SK-N-SH (cell line): ENCODE measurements at regions of chr1 and their contacts with region 1.

Region 1: DNA sequence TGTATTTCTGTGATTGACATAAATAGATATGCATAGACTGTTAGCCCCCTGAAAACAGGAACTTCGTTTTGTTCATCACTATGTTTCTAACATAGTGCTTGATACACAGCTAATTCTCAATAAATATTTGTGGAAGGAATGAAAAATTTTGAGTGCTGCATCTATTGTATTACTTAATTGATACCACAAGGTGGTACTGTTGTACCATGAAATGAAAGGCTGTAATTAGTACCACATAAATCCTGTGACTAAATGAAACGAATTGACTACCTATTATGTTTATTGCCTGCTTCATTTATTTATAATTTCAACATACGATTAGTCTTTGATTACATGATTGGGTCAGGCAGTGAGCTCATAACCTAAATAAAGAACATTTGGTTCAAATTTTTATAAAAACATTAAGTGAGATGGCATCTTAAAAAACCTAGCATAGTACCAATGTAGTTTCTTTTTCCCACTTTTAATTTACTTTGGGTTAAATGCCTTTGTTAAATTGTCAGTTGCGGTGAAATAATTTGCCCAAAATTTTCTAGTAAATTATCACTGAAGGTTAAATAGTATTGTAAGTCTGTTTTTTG is 15.0 kb upstream of the TGFB2 start:
- DNase-seq: peak; percentile 56
- H3K4me3 ChIP-seq: no peak overlapping the region; a peak in 1 of 4 replicates
- H3K27ac ChIP-seq: peak overlapping the region in 1 of 2 experiments; percentile 31; a peak in 1 of 4 replicates
- H3K4me1 ChIP-seq: peaks cover 0 to 6% of the 10 kb centered on the region in 2 experiments; a peak in 2 of 4 replicates
- H3K27me3 ChIP-seq: no peaks in the 10 kb centered on the region
- CTCF ChIP-seq: peak; percentile 82
- EP300 ChIP-seq: no peak
- RAD21 ChIP-seq: peak; percentile 90

Region 2: DNA sequence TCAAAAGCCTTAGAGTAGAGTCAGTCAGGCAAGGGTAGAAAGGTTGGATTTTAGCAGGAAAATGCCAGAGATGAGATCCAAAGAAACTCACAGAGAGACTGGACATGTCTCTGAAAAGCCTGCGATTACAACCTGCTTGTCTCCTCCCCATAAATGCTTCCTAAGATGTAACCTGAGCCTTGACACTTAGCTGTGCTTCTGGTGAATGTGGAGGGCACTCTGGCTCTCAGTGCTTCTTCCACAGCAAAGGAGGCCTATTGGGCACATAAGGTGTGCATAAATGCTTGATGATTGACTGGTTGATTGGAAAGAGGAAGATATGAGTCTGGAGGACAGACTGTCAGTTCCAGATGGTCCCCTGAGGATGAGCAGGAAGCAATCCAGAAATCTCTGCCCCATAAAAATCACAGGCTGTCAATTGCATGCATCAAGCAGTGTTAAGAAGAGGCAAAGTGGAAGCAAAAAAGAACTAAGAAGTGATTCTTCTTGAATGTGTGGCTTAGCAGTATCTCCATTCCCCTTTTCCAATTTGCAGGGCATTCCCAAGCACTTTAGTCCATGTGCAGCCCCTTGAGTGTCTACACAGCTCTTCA is 281.2 kb before region 1 on chr1:
- CTCF ChIA-PET with region 1: no interaction called
- POLR2A ChIA-PET with region 1: no interaction called
- DNase-seq: no peak
- H3K4me3 ChIP-seq: no peak overlapping the region
- H3K27ac ChIP-seq: no peak overlapping the region
- H3K4me1 ChIP-seq: no peaks in the 10 kb centered on the region; a peak in 1 of 4 replicates
- H3K27me3 ChIP-seq: no peaks in the 10 kb centered on the region
- CTCF ChIP-seq: no peak
- EP300 ChIP-seq: no peak
- RAD21 ChIP-seq: no peak

Region 3: GRCh38 chr1:218299416-218299815 is 30.7 kb before region 1 on chr1:
- CTCF ChIA-PET with region 1: interaction called, 24 read pairs
- POLR2A ChIA-PET with region 1: no interaction called
- DNase-seq: no peak
- H3K4me3 ChIP-seq: no peak overlapping the region; a peak in 1 of 4 replicates
- H3K27ac ChIP-seq: peak overlapping the region; percentile 19 to 39; a peak in 2 of 4 replicates
- H3K4me1 ChIP-seq: peaks cover 6 to 10% of the 10 kb centered on the region in 2 experiments; a peak in 3 of 4 replicates
- H3K27me3 ChIP-seq: no peaks in the 10 kb centered on the region
- CTCF ChIP-seq: peak; percentile 68
- EP300 ChIP-seq: no peak
- RAD21 ChIP-seq: peak; percentile 77

Region 4: GRCh38 chr1:218304281-218305039 is 25.7 kb before region 1 on chr1:
- CTCF ChIA-PET with region 1: interaction called, 24 read pairs
- POLR2A ChIA-PET with region 1: no interaction called
- DNase-seq: peak; percentile 73
- H3K4me3 ChIP-seq: no peak overlapping the region
- H3K27ac ChIP-seq: peak overlapping the region in 1 of 2 experiments; percentile 53; a peak in 1 of 4 replicates
- H3K4me1 ChIP-seq: peaks cover 0 to 13% of the 10 kb centered on the region in 2 experiments; a peak in 3 of 4 replicates
- H3K27me3 ChIP-seq: no peaks in the 10 kb centered on the region
- CTCF ChIP-seq: no peak
- EP300 ChIP-seq: no peak
- RAD21 ChIP-seq: no peak

Region 5: GRCh38 chr1:218314316-218314715 is 15.8 kb before region 1 on chr1:
- CTCF ChIA-PET with region 1: interaction called, 10 read pairs
- POLR2A ChIA-PET with region 1: no interaction called
- DNase-seq: no peak
- H3K4me3 ChIP-seq: no peak overlapping the region
- H3K27ac ChIP-seq: no peak overlapping the region
- H3K4me1 ChIP-seq: no peaks in the 10 kb centered on the region
- H3K27me3 ChIP-seq: no peaks in the 10 kb centered on the region
- CTCF ChIP-seq: no peak
- EP300 ChIP-seq: no peak
- RAD21 ChIP-seq: no peak

Region 6: GRCh38 chr1:218345673-218346390 is 15.7 kb after region 1 on chr1:
- CTCF ChIA-PET with region 1: interaction called, 22 read pairs
- POLR2A ChIA-PET with region 1: no interaction called
- DNase-seq: peak; percentile 89
- H3K4me3 ChIP-seq: peak overlapping the region; percentile 52 to 57
- H3K27ac ChIP-seq: peak overlapping the region; percentile 29 to 32; a peak in 3 of 4 replicates
- H3K4me1 ChIP-seq: peaks cover 7 to 24% of the 10 kb centered on the region in 2 experiments; a peak in 2 of 4 replicates
- H3K27me3 ChIP-seq: no peaks in the 10 kb centered on the region
- CTCF ChIP-seq: no peak
- EP300 ChIP-seq: no peak; a peak in 1 of 4 replicates
- RAD21 ChIP-seq: peak; percentile 12; the same call in 1 of the 2 replicates

Region 7: DNA sequence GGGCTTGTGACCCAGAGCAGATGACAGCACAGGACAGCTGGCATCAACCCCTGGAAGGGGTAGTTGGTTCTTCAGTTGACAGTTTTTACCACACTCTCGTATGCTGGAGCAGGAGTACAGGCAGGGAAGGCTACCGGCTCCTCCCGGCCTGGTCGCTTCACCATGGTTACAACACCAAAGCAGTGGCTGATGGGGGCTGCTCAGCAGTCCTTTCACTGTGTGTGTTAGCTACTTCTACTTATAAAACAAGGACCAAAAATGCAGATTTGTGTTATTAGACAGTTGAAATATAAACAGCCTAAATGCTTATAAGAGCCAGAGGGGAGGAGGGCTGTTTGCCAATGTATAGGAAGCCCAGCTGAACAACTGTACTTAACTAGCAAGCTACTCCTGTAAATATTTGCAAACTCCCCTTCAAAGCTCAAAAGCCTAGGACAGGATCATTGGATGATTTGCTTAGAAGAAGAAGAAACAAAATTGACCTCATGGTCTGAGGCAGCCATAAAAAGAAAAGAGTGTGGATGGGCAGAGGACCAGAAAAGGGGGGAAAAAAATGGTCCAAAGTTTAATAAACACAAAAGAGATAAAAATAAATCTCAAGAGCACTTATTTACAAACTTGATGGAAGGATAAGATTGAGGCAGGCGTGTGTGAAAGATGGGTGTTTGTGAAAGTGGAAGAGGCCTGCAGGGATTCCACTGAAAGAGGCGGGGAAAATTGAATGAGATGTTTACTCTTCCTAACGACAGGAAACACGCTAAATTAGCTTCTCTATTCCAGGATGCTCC is 72.1 kb after region 1 on chr1:
- CTCF ChIA-PET with region 1: no interaction called
- POLR2A ChIA-PET with region 1: no interaction called
- DNase-seq: no peak
- H3K4me3 ChIP-seq: no peak overlapping the region
- H3K27ac ChIP-seq: no peak overlapping the region
- H3K4me1 ChIP-seq: no peaks in the 10 kb centered on the region
- H3K27me3 ChIP-seq: no peaks in the 10 kb centered on the region
- CTCF ChIP-seq: no peak
- EP300 ChIP-seq: no peak
- RAD21 ChIP-seq: no peak

Region 8: GRCh38 chr1:219066631-219067349 is 736.7 kb after region 1 on chr1:
- CTCF ChIA-PET with region 1: interaction called, 12 read pairs
- POLR2A ChIA-PET with region 1: no interaction called
- DNase-seq: peak; percentile 7
- H3K4me3 ChIP-seq: no peak overlapping the region
- H3K27ac ChIP-seq: peak overlapping the region; percentile 60 to 79; a peak in 3 of 4 replicates
- H3K4me1 ChIP-seq: peaks cover 0 to 14% of the 10 kb centered on the region in 2 experiments; a peak in 2 of 4 replicates
- H3K27me3 ChIP-seq: no peaks in the 10 kb centered on the region
- CTCF ChIP-seq: peak; percentile 65
- EP300 ChIP-seq: peak; percentile 4 to 75; a peak in 2 of 4 replicates
- RAD21 ChIP-seq: peak; percentile 77

Region 9: GRCh38 chr1:219566951-219567947 is 1237.1 kb after region 1 on chr1:
- CTCF ChIA-PET with region 1: interaction called, 32 read pairs
- POLR2A ChIA-PET with region 1: no interaction called
- DNase-seq: peak; percentile 26
- H3K4me3 ChIP-seq: no peak overlapping the region; a peak in 1 of 4 replicates
- H3K27ac ChIP-seq: peak overlapping the region in 1 of 2 experiments; percentile 32; a peak in 2 of 4 replicates
- H3K4me1 ChIP-seq: peaks cover 5 to 6% of the 10 kb centered on the region in 2 experiments; a peak in 2 of 4 replicates
- H3K27me3 ChIP-seq: no peaks in the 10 kb centered on the region
- CTCF ChIP-seq: peak; percentile 87
- EP300 ChIP-seq: peak in 1 of 2 experiments; percentile 38; a peak in 1 of 4 replicates
- RAD21 ChIP-seq: peak; percentile 95